Cardiac septum (tissue), 1 donor: ENCODE measurements at regions of chr1 and their contacts with region 1.

Region 1: GRCh38 chr1:91712981-91713841 is 172.7 kb downstream of the TGFBR3 start:
- DNase-seq: no peak

Region 2: GRCh38 chr1:91795591-91796389 is 82.6 kb after region 1 on chr1:
- intact Hi-C with region 1: loop called (anchors 5 kb)
- DNase-seq: no peak

Region 3: GRCh38 chr1:92277105-92277723 is 564.0 kb after region 1 on chr1:
- intact Hi-C with region 1: no loop called
- DNase-seq: no peak